ENCODE measurements at regions of chr5 and their contacts with region 1.

Region 1: DNA sequence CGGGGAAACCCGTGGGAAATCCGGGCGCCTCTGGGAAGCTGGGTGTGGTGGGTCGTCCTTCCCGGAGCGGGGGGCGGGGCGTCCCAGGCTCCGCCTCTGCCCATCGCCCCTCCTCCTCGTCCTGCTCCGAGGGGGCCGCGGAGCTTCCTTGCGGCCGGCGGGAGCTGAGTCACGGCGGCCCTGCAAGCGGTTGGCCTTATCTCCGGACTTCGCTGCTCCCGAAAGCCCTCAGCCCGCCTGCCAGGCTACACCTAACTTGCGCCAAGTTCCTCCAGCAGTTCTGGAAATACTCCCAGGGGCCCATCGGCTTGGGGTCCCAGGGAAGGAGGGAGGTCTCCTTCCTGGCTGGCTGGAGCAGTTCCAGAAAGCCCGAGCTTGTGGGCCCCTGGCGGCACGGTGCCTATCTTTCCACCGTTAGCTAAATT is 54.1 kb upstream of the CDKN2AIPNL start:
- H3K4me3 ChIP-seq: peak overlapping the region; percentile 54
- H3K27ac ChIP-seq: peak overlapping the region; percentile 90
- H3K4me1 ChIP-seq: peaks cover 3% of the 10 kb centered on the region
- CTCF ChIP-seq: peak; percentile 48; the same call in 1 of the 2 replicates

Region 2: GRCh38 chr5:134411546-134412266 is 54.1 kb before region 1 on chr5 and contains the start of gene CDKN2AIPNL:
- CTCF ChIA-PET with region 1: interaction called, 12 read pairs
- POLR2A ChIA-PET with region 1: interaction called, 27 read pairs
- H3K4me3 ChIP-seq: peak within 1 kb of the TSS; percentile 91
- H3K27ac ChIP-seq: peak within 1 kb of the TSS; percentile 63; the same call in 1 of the 2 replicates
- H3K4me1 ChIP-seq: peaks cover 10% of the 10 kb centered on the region
- CTCF ChIP-seq: peak; percentile 97

Region 3: GRCh38 chr5:134451936-134452505 is 13.8 kb before region 1 on chr5:
- CTCF ChIA-PET with region 1: interaction called, 4 read pairs
- POLR2A ChIA-PET with region 1: interaction called, 12 read pairs
- H3K4me3 ChIP-seq: no peak overlapping the region
- H3K27ac ChIP-seq: no peak overlapping the region
- H3K4me1 ChIP-seq: peaks cover 2% of the 10 kb centered on the region; the same call in 1 of the 2 replicates
- CTCF ChIP-seq: no peak

Region 4: DNA sequence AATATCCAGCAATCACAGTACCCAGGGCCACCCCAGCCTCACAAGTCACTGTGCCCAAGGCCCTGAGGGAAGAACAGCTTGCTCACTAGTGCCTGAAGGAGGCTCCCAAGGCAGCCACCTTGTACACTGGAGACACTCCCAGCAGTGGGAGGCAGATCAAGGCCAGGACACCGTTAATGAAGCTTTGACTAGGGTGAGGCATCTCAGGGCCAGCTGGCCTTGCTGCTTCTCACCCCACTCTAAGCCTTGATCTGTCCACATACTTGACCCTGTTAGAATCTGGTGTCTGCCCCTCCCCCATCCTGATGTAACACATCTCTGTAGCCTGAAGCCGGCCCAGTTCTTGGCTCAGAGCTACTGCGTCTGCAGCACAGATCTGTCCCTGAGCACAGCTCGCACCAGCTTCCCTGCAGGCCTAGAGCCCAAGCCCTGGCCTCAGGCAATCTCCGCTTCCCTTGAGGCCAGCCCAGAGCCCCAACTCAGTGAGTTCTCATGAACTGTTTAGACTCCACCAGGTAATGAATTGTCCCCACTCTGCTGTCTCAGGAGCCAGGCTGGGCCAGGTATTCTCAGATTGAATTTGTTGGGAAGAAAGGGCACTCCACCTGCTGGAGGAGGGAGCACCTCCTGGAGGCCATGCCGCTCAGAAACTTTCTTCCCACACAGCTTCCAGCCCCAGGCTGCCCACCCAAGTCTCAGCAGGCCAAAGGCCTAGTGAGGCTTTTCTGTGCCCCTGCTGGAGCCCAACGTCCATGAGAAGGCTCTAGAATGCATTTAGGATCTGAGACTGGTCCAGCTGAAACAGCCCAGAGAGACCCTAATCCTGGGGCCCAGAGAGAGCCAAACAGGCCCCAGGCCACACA is 46.2 kb after region 1 on chr5:
- CTCF ChIA-PET with region 1: interaction called, 3 read pairs
- POLR2A ChIA-PET with region 1: interaction called, 23 read pairs
- H3K4me3 ChIP-seq: no peak overlapping the region
- H3K27ac ChIP-seq: no peak overlapping the region
- H3K4me1 ChIP-seq: peaks cover 9% of the 10 kb centered on the region; the same call in 1 of the 2 replicates
- CTCF ChIP-seq: peak; percentile 40; the same call in 1 of the 2 replicates

Region 5: DNA sequence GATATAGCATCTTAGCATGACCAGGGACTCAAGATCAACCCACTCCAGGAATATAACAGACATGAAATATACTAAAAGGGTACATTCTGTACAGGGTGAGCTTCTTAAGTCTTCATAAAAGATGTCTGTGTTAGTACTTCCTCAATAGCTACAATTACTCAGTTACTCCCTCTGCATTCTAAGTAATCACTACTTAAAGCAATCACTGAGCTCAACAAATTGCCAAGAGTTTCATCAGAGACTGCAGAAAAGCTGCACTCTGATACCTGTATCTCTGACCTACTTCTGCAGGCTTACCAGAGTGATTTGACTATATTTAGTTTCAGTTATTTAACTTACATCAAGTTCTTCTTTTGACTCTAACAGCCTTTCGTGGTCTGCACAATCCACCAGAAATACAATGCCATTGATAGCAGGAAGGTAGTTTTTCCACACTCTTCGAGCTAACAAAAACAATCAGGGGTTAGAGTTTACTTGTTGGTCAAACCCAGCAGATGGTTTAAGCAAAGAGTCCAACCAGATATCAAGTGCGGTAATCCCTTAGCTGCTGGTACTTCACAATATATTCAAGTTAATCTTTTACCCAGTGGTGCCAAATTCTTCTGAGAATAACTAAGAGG is 143.5 kb after region 1 on chr5:
- CTCF ChIA-PET with region 1: no interaction called
- POLR2A ChIA-PET with region 1: no interaction called
- H3K4me3 ChIP-seq: no peak overlapping the region
- H3K27ac ChIP-seq: no peak overlapping the region
- H3K4me1 ChIP-seq: no peaks in the 10 kb centered on the region
- CTCF ChIP-seq: no peak

Region 6: GRCh38 chr5:134994560-134995156 is 528.8 kb after region 1 on chr5:
- CTCF ChIA-PET with region 1: no interaction called
- POLR2A ChIA-PET with region 1: no interaction called
- H3K4me3 ChIP-seq: no peak overlapping the region
- H3K27ac ChIP-seq: no peak overlapping the region
- H3K4me1 ChIP-seq: no peaks in the 10 kb centered on the region
- CTCF ChIP-seq: no peak

Measured in HEK293 (cell line).